Common myeloid progenitor, CD34-positive (primary cell): ENCODE measurements at regions of chr17 and their contacts with region 1.

Region 1: GRCh38 chr17:17467720-17468119 is 9.1 kb upstream of the MED9 start:
- DNase-seq: no peak
- H3K4me3 ChIP-seq: no peak overlapping the region
- H3K27ac ChIP-seq: no peak overlapping the region
- H3K4me1 ChIP-seq: no peaks in the 10 kb centered on the region
- H3K27me3 ChIP-seq: peaks cover 0 to 2% (median 0%) of the 10 kb centered on the region in 5 experiments

Region 2: DNA sequence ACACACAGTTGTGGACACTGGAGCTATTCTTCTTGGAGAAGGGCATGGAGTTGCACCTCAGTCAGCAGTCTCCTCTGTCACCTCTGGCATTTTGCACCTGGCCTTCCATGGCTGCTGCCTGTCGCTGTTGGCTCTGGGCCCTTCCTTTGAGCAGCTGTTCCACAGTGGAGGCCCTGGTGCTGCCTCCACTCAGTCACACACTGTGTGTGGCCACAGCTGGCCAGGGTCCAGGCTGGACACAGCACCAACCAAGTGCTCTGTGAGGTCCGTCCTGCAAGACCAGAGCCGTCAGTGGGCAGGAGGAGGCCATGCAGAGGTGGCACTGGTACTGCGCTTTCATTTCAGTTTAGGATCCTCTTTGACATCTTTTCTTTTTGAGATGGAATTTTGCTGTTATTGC is 12.5 kb before region 1 on chr17:
- CTCF ChIA-PET with region 1: interaction called, 13 read pairs
- POLR2A ChIA-PET with region 1: no interaction called
- DNase-seq: no peak
- H3K4me3 ChIP-seq: no peak overlapping the region
- H3K27ac ChIP-seq: no peak overlapping the region
- H3K4me1 ChIP-seq: no peaks in the 10 kb centered on the region
- H3K27me3 ChIP-seq: no peaks in the 10 kb centered on the region